ENCODE measurements at regions of chr12 and their contacts with region 1.

Region 1: GRCh38 chr12:68686595-68687521 is at the start of gene NUP107:
- DNase-seq: peak; percentile 95 to 100
- ATAC-seq: peak; percentile 96 to 98 (median 98)
- H3K4me3 ChIP-seq: peak within 1 kb of the TSS; percentile 83
- H3K4me3 Mint-ChIP-seq: peak within 1 kb of the TSS; percentile 97
- H3K27ac ChIP-seq: peak within 1 kb of the TSS; percentile 76
- H3K27ac Mint-ChIP-seq: peak within 1 kb of the TSS; percentile 96 to 98
- H3K4me1 ChIP-seq: peaks cover 2% of the 10 kb centered on the region
- H3K4me1 Mint-ChIP-seq: peaks cover 24 to 31% of the 10 kb centered on the region in 2 donors
- H3K27me3 ChIP-seq: no peaks in the 10 kb centered on the region
- H3K27me3 Mint-ChIP-seq: no peaks in the 10 kb centered on the region
- CTCF ChIP-seq: no peak
- total RNA-seq, gene NUP107: 54.9 to 69.2 (median 62.0) TPM

Region 2: GRCh38 chr12:67151886-67152285 is 1535.0 kb before region 1 on chr12:
- intact Hi-C with region 1: no loop called
- DNase-seq: no peak
- ATAC-seq: no peak
- H3K4me3 ChIP-seq: no peak overlapping the region
- H3K4me3 Mint-ChIP-seq: no peak overlapping the region
- H3K27ac ChIP-seq: no peak overlapping the region
- H3K27ac Mint-ChIP-seq: no peak overlapping the region
- H3K4me1 ChIP-seq: no peaks in the 10 kb centered on the region
- H3K4me1 Mint-ChIP-seq: no peaks in the 10 kb centered on the region
- H3K27me3 ChIP-seq: peaks cover 2% of the 10 kb centered on the region
- H3K27me3 Mint-ChIP-seq: peaks cover 10 to 30% of the 10 kb centered on the region in 2 donors
- CTCF ChIP-seq: no peak

Region 3: DNA sequence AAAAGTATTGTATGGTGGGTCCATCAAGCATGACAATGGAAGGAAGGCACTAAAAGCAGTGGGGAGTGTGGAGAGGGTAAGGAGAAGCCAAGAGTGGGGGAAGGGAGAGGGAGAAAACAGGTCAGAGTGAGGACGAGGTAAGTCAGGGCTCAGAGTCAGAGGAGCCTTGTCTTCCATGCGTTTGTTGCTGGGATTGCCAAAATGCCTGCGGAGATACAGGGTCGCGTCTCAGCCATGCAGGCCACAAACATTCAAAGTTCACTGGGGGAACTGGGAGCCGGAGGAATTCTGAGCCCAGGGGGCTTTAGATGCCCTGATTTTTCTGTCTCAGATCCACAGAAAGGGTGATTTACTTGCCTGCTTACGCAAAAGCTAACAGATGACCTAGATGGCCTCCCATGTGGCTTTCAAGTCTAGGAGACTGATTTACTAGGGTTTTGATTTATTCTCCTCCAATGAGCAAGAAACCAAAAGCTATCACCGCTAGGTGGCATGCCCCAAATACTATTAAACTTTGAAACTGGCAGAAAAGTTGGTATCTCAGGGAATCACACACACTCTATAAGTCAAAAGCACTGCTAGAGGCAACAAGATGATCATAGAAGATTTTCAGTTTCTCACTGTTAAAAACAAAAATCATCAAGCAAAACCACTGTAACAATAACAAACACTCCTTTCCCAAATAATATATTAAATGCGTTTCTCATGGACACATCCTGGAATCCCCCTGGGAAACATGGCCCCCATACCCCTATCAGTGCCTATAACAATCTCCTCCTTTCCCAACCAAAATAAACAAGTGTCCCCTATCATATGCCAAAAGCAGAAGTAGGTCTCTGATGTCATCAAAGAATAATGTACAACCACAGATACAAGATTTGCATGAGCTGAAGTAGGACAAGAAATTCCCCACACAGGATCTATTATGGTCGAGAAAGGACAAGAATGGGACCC is 328.0 kb before region 1 on chr12:
- intact Hi-C with region 1: loop called (anchors 1 kb)
- DNase-seq: peak in 1 of 2 donors; percentile 85
- ATAC-seq: peak; percentile 81 to 89 (median 87)
- H3K4me3 ChIP-seq: no peak overlapping the region
- H3K4me3 Mint-ChIP-seq: peak overlapping the region; percentile 25
- H3K27ac ChIP-seq: peak overlapping the region; percentile 49
- H3K27ac Mint-ChIP-seq: peak overlapping the region; percentile 79 to 94
- H3K4me1 ChIP-seq: peaks cover 19% of the 10 kb centered on the region
- H3K4me1 Mint-ChIP-seq: peaks cover 30 to 31% of the 10 kb centered on the region in 2 donors
- H3K27me3 ChIP-seq: no peaks in the 10 kb centered on the region
- H3K27me3 Mint-ChIP-seq: no peaks in the 10 kb centered on the region
- CTCF ChIP-seq: peak; percentile 78

Region 4: GRCh38 chr12:68610370-68611093 is 76.3 kb before region 1 on chr12 and contains the start of gene RAP1B:
- intact Hi-C with region 1: loop called (anchors 5 kb)
- DNase-seq: peak; percentile 87 to 96
- ATAC-seq: peak; percentile 76 to 94 (median 85)
- H3K4me3 ChIP-seq: peak within 1 kb of the TSS; percentile 100
- H3K4me3 Mint-ChIP-seq: peak within 1 kb of the TSS; percentile 98
- H3K27ac ChIP-seq: peak within 1 kb of the TSS; percentile 99
- H3K27ac Mint-ChIP-seq: peak within 1 kb of the TSS; percentile 84 to 95
- H3K4me1 ChIP-seq: peaks cover 19% of the 10 kb centered on the region
- H3K4me1 Mint-ChIP-seq: peaks cover 57 to 58% of the 10 kb centered on the region in 2 donors
- H3K27me3 ChIP-seq: no peaks in the 10 kb centered on the region
- H3K27me3 Mint-ChIP-seq: no peaks in the 10 kb centered on the region
- CTCF ChIP-seq: no peak
- total RNA-seq, gene RAP1B: 517 to 664 (median 572) TPM

Region 5: GRCh38 chr12:68648179-68648578 is 38.7 kb before region 1 on chr12:
- intact Hi-C with region 1: loop called (anchors 5 kb)
- DNase-seq: no peak
- ATAC-seq: peak; percentile 50 to 64 (median 58)
- H3K4me3 ChIP-seq: no peak overlapping the region
- H3K4me3 Mint-ChIP-seq: peak overlapping the region; percentile 78
- H3K27ac ChIP-seq: peak overlapping the region; percentile 22
- H3K27ac Mint-ChIP-seq: peak overlapping the region; percentile 92 to 97
- H3K4me1 ChIP-seq: peaks cover 31% of the 10 kb centered on the region
- H3K4me1 Mint-ChIP-seq: peaks cover 64 to 65% of the 10 kb centered on the region in 2 donors
- H3K27me3 ChIP-seq: no peaks in the 10 kb centered on the region
- H3K27me3 Mint-ChIP-seq: no peaks in the 10 kb centered on the region
- CTCF ChIP-seq: no peak

Region 6: GRCh38 chr12:68665016-68665569 is 21.8 kb before region 1 on chr12:
- intact Hi-C with region 1: no loop called
- DNase-seq: no peak
- ATAC-seq: no peak
- H3K4me3 ChIP-seq: no peak overlapping the region
- H3K4me3 Mint-ChIP-seq: no peak overlapping the region
- H3K27ac ChIP-seq: no peak overlapping the region
- H3K27ac Mint-ChIP-seq: peak overlapping the region; percentile 82 to 84
- H3K4me1 ChIP-seq: no peaks in the 10 kb centered on the region
- H3K4me1 Mint-ChIP-seq: peaks cover 34 to 40% of the 10 kb centered on the region in 2 donors
- H3K27me3 ChIP-seq: no peaks in the 10 kb centered on the region
- H3K27me3 Mint-ChIP-seq: no peaks in the 10 kb centered on the region
- CTCF ChIP-seq: no peak

Region 7: DNA sequence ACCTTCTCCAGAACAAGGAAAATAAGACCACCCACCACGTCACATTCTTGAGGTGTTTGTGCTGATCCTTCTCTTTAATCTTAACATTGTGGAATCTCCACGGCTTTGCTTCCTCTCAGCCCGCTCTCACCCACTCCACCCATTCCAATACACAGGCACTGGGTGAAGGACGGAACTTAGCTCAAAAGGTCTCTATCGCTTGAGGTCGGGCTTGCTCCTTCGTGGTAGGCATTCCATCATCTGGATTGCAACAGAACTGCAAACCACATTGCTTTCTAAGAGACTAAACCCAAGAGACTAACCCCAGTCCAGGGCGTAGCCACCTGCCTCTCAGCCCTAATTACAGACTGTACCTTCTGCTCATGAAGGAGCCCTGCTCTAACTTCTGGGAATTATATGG is 97.2 kb after region 1 on chr12:
- intact Hi-C with region 1: no loop called
- DNase-seq: no peak
- ATAC-seq: peak in 1 of 3 donors; percentile 72
- H3K4me3 ChIP-seq: no peak overlapping the region
- H3K4me3 Mint-ChIP-seq: no peak overlapping the region
- H3K27ac ChIP-seq: no peak overlapping the region
- H3K27ac Mint-ChIP-seq: no peak overlapping the region
- H3K4me1 ChIP-seq: no peaks in the 10 kb centered on the region
- H3K4me1 Mint-ChIP-seq: no peaks in the 10 kb centered on the region
- H3K27me3 ChIP-seq: no peaks in the 10 kb centered on the region
- H3K27me3 Mint-ChIP-seq: no peaks in the 10 kb centered on the region
- CTCF ChIP-seq: no peak

Region 8: DNA sequence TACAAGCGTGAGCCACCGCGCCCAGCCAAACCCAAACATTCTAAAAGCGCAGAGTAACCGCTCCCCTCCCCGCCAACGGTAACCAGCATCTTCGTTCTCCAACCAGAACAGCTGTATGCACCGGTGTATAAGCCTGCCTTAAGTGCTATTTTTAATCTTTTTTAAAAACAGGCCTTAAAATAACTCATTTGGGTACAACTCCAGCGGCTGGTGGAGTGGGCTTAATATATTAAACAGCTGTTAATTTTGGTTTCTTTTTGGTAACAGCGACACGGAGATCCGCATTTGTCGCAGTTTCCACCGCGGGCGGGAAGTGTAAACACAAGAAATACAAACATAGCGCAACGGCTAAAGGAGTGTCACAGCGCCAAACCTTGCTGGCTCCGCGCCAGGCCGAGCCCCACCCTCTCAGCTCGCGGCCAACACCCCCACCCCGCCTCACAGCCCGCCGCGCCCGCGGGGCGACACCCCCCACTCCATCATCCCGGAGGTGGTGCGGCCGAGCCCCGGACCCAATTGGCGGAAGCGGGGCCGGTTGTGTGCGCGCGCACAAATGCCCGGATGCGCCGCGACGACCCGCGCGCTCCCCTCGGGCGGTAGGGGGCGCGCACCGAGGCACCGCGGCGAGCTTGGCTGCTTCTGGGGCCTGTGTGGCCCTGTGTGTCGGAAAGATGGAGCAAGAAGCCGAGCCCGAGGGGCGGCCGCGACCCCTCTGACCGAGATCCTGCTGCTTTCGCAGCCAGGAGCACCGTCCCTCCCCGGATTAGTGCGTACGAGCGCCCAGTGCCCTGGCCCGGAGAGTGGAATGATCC is 120.9 kb after region 1 on chr12 and contains the start of gene MDM2:
- intact Hi-C with region 1: loop called (anchors 5 kb)
- DNase-seq: peak; percentile 99
- ATAC-seq: peak; percentile 88 to 97 (median 93)
- H3K4me3 ChIP-seq: peak within 1 kb of the TSS; percentile 94
- H3K4me3 Mint-ChIP-seq: peak within 1 kb of the TSS; percentile 91
- H3K27ac ChIP-seq: peak within 1 kb of the TSS; percentile 98
- H3K27ac Mint-ChIP-seq: peak within 1 kb of the TSS; percentile 96 to 97
- H3K4me1 ChIP-seq: peaks cover 18% of the 10 kb centered on the region
- H3K4me1 Mint-ChIP-seq: peaks cover 13 to 19% of the 10 kb centered on the region in 2 donors
- H3K27me3 ChIP-seq: no peaks in the 10 kb centered on the region
- H3K27me3 Mint-ChIP-seq: no peaks in the 10 kb centered on the region
- CTCF ChIP-seq: peak; percentile 75
- total RNA-seq, gene MDM2: 130 to 143 (median 132) TPM

Measured in natural killer cell (primary cell).